ENCODE measurements at regions of chr1 and their contacts with region 1.

Region 1: GRCh38 chr1:6245086-6245868 is 1.3 kb downstream of the HES3 start:
- ATAC-seq: peak; percentile 23 to 63 (median 56)
- H3K4me3 ChIP-seq: peak overlapping the region; percentile 32 to 46 (median 38)
- H3K27ac ChIP-seq: peak overlapping the region; percentile 6 to 75
- H3K4me1 ChIP-seq: peaks cover 54 to 60% of the 10 kb centered on the region in 2 donors

Region 2: GRCh38 chr1:6052543-6053205 is 192.6 kb before region 1 on chr1:
- in situ Hi-C with region 1: loop called in 1 of 9 experiments (anchors 25 kb)
- ATAC-seq: peak; percentile 72 to 89 (median 80)
- H3K4me3 ChIP-seq: no peak overlapping the region
- H3K27ac ChIP-seq: no peak overlapping the region
- H3K4me1 ChIP-seq: peaks cover 22% of the 10 kb centered on the region in 2 donors

Region 3: GRCh38 chr1:6343506-6344405 is 98.5 kb after region 1 on chr1:
- in situ Hi-C with region 1: loop called in 5 of 9 experiments (anchors 10 to 25 kb)
- ATAC-seq: peak; percentile 36 to 96 (median 60)
- H3K4me3 ChIP-seq: no peak overlapping the region
- H3K27ac ChIP-seq: no peak overlapping the region
- H3K4me1 ChIP-seq: peaks cover 36 to 44% of the 10 kb centered on the region in 2 donors

Region 4: DNA sequence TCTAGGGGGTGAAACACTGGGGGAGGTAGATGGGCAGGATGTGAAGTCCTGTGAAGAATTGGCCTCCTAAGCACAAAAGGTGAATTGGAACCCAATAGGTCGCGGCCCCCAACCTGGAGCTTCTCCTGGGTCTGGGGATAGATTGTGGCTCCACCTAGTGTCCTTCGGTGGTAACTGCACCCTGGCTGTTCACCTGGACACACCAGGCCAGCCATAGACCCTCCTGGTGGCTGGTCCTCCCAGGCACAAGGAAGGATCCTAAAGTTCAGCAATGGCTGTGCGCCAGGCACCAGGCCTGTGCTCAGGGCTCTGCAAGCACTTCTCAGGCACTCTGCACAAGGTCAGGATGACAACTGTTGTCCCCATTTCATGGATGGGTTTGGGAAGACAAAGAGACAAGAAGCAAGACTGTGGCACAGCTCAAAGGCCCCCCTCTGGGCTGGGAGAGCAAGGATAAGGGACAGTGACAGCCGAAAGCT is 192.8 kb after region 1 on chr1:
- in situ Hi-C with region 1: loop called in 1 of 9 experiments (anchors 25 kb)
- ATAC-seq: peak; percentile 23 to 48 (median 39)
- H3K4me3 ChIP-seq: no peak overlapping the region
- H3K27ac ChIP-seq: no peak overlapping the region
- H3K4me1 ChIP-seq: peaks cover 27 to 37% of the 10 kb centered on the region in 2 donors

Region 5: DNA sequence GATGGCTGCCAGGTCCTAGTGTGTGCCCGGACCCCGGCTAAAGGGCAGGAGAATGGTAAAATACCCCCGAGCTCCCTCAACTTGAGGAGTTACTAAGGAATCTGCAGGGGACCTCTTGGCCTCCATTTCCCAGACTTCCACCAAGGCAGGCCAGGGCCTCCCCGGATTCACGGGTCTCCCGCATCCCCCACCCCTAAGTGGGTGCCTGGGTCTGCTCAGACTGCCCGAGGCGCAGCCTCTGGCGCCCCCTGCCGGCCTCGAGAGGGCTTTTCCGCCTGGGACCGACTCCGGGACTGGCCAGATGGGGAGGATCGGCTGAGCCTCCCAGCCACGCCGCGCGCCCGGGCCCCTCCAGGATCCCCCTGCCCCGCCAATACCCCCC is 244.5 kb after region 1 on chr1:
- in situ Hi-C with region 1: loop called in 1 of 9 experiments (anchors 25 kb)
- ATAC-seq: peak; percentile 50 to 78 (median 67)
- H3K4me3 ChIP-seq: peak overlapping the region; percentile 45 to 94 (median 62)
- H3K27ac ChIP-seq: no peak overlapping the region
- H3K4me1 ChIP-seq: peaks cover 12 to 23% of the 10 kb centered on the region in 2 donors

Measured in motor neuron (in vitro differentiated cells).